GM12878 (cell line): ENCODE measurements at regions of chr20 and their contacts with region 1.

Region 1: GRCh38 chr20:37288091-37288490 is 1.4 kb upstream of the MANBAL start:
- DNase-seq: no peak
- ATAC-seq: no peak
- H3K4me3 ChIP-seq: no peak overlapping the region
- H3K27ac ChIP-seq: no peak overlapping the region
- H3K4me1 ChIP-seq: peaks cover 16% of the 10 kb centered on the region
- H3K27me3 ChIP-seq: no peaks in the 10 kb centered on the region
- CTCF ChIP-seq: no peak
- EP300 ChIP-seq: no peak
- POLR2A ChIP-seq: no peak
- RAD21 ChIP-seq: no peak

Region 2: DNA sequence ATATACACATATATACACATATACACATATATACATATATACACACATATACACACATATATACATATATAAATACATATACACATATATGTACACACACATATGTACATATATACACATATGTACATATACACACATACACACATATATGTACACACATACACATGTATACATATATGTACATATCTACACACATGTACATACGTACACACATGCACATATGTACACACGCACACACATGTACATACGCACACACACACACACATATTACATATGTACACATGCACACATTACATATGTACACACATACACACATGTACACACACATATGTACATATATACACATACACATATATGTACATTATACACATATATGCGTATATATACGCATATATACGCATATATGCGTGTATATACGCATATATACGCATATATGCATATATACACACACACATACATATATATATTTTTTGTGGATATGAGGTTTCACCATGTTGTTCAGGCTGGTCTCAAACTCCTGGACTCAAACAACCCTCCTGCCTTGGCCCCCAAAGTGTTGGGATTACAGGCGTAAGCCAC is 85.0 kb after region 1 on chr20:
- CTCF ChIA-PET with region 1: interaction called, 3 read pairs
- POLR2A ChIA-PET with region 1: interaction called, 11 read pairs
- RAD21 ChIA-PET with region 1: no interaction called
- SMC1A ChIA-PET with region 1: interaction called, 8 read pairs
- in situ Hi-C with region 1: no loop called
- intact Hi-C with region 1: loop called (anchors 5 kb)
- DNase-seq: no peak
- ATAC-seq: no peak
- H3K4me3 ChIP-seq: no peak overlapping the region
- H3K27ac ChIP-seq: no peak overlapping the region; the same call in 1 of the 2 replicates
- H3K4me1 ChIP-seq: peaks cover 75% of the 10 kb centered on the region
- H3K27me3 ChIP-seq: no peaks in the 10 kb centered on the region
- CTCF ChIP-seq: no peak
- EP300 ChIP-seq: no peak
- POLR2A ChIP-seq: no peak
- RAD21 ChIP-seq: no peak

Region 3: GRCh38 chr20:38007526-38007925 is 719.4 kb after region 1 on chr20:
- CTCF ChIA-PET with region 1: no interaction called
- POLR2A ChIA-PET with region 1: no interaction called
- RAD21 ChIA-PET with region 1: no interaction called
- SMC1A ChIA-PET with region 1: no interaction called
- in situ Hi-C with region 1: no loop called
- intact Hi-C with region 1: no loop called
- DNase-seq: no peak
- ATAC-seq: no peak
- H3K4me3 ChIP-seq: no peak overlapping the region
- H3K27ac ChIP-seq: no peak overlapping the region
- H3K4me1 ChIP-seq: no peaks in the 10 kb centered on the region
- H3K27me3 ChIP-seq: no peaks in the 10 kb centered on the region
- CTCF ChIP-seq: no peak
- EP300 ChIP-seq: no peak
- POLR2A ChIP-seq: no peak
- RAD21 ChIP-seq: no peak